ENCODE measurements at regions of chr13 and their contacts with region 1.

Region 1: GRCh38 chr13:26498656-26499591 is 58.6 kb upstream of the WASF3 start:
- DNase-seq: no peak
- ATAC-seq: no peak
- H3K4me3 ChIP-seq: no peak overlapping the region
- H3K27ac ChIP-seq: no peak overlapping the region
- H3K4me1 ChIP-seq: no peaks in the 10 kb centered on the region
- H3K27me3 ChIP-seq: no peaks in the 10 kb centered on the region
- CTCF ChIP-seq: no peak

Region 2: DNA sequence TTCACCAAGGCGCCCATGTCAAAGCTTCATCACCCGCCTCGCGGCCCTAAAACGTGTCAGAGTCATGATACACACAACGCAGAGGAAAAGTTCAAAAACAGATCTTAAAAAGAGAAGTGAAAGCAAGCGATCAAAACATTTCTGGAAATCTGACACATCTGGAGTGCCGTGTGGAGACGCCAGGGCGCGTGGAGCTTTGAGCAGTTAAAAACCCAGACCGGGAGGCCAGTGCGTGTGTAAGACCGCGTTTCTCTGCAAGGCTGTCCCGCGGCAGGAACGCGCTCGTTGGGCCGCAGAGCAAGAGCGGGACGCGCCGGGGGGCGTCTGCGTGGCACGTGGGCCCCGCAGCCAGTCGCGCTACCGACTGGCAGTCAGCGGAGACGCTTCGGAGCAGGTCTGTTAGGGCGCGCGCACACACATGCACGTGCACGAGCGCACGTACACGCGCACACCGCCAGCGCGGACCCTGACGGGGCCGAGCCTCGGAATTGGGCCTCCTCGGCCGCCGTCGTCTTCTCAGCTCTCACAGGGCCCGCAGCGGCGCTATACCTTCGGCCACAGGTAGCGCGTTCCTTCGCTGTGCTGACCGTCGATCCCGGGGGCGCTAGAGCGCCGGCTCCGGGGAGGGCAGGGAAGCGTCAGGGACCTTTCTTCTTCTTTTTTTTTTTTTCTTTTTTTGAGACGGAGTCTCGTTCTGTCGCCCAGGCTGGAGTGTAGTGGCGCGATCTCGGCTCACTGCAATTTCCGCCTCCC is 312.6 kb before region 1 on chr13:
- intact Hi-C with region 1: loop called (anchors 5 kb)
- DNase-seq: peak; percentile 94
- ATAC-seq: peak; percentile 99
- H3K4me3 ChIP-seq: peak overlapping the region; percentile 72
- H3K27ac ChIP-seq: peak overlapping the region; percentile 86
- H3K4me1 ChIP-seq: peaks cover 14% of the 10 kb centered on the region
- H3K27me3 ChIP-seq: no peaks in the 10 kb centered on the region
- CTCF ChIP-seq: peak; percentile 42

Region 3: GRCh38 chr13:26872525-26873385 is 373.8 kb after region 1 on chr13:
- intact Hi-C with region 1: no loop called
- DNase-seq: peak; percentile 53
- ATAC-seq: no peak
- H3K4me3 ChIP-seq: no peak overlapping the region
- H3K27ac ChIP-seq: no peak overlapping the region
- H3K4me1 ChIP-seq: no peaks in the 10 kb centered on the region
- H3K27me3 ChIP-seq: peaks cover 12% of the 10 kb centered on the region
- CTCF ChIP-seq: peak; percentile 60

Measured in lower lobe of right lung (tissue), 2 donors.